ENCODE measurements at regions of chr9 and their contacts with region 1.

Region 1: GRCh38 chr9:131393622-131394463 is at the start of gene PRRC2B:
- DNase-seq: peak; percentile 78
- ATAC-seq: peak; percentile 53
- H3K4me3 ChIP-seq: peak within 1 kb of the TSS; percentile 98
- H3K27ac ChIP-seq: peak within 1 kb of the TSS; percentile 68
- H3K4me1 ChIP-seq: peaks cover 27% of the 10 kb centered on the region
- H3K27me3 ChIP-seq: no peaks in the 10 kb centered on the region
- CTCF ChIP-seq: no peak
- total RNA-seq, gene PRRC2B: 46.9 and 64.7 TPM in 2 replicates

Region 2: DNA sequence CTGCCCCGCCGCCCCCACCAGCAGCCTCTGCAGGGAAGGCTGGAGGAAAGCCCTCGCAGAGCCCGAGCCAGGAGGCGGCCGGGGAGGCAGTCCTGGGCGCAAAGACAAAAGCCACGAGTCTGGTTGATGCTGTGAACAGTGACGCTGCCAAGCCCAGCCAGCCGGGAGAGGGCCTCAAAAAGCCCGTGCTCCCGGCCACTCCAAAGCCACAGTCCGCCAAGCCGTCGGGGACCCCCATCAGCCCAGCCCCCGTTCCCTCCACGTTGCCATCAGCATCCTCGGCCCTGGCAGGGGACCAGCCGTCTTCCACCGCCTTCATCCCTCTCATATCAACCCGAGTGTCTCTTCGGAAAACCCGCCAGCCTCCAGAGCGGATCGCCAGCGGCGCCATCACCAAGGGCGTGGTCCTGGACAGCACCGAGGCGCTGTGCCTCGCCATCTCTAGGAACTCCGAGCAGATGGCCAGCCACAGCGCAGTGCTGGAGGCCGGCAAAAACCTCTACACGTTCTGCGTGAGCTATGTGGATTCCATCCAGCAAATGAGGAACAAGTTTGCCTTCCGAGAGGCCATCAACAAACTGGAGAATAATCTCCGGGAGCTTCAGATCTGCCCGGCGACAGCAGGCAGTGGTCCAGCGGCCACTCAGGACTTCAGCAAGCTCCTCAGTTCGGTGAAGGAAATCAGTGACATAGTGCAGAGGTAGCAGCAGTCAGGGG is 508.7 kb before region 1 on chr9:
- CTCF ChIA-PET with region 1: no interaction called
- POLR2A ChIA-PET with region 1: no interaction called
- intact Hi-C with region 1: no loop called
- DNase-seq: no peak
- ATAC-seq: no peak
- H3K4me3 ChIP-seq: no peak overlapping the region
- H3K27ac ChIP-seq: no peak overlapping the region
- H3K4me1 ChIP-seq: no peaks in the 10 kb centered on the region; the same call in 1 of the 2 replicates
- H3K27me3 ChIP-seq: no peaks in the 10 kb centered on the region
- CTCF ChIP-seq: no peak

Region 3: GRCh38 chr9:131289301-131290038 is 104.4 kb before region 1 on chr9 and contains the start of gene PLPP7:
- CTCF ChIA-PET with region 1: no interaction called
- POLR2A ChIA-PET with region 1: no interaction called
- intact Hi-C with region 1: no loop called
- DNase-seq: no peak
- ATAC-seq: no peak
- H3K4me3 ChIP-seq: no peak within 1 kb of the TSS
- H3K27ac ChIP-seq: no peak within 1 kb of the TSS
- H3K4me1 ChIP-seq: no peaks in the 10 kb centered on the region
- H3K27me3 ChIP-seq: no peaks in the 10 kb centered on the region
- CTCF ChIP-seq: no peak
- total RNA-seq, gene PLPP7: 0.98 TPM in 1 of 2 replicates, not detected in the other

Region 4: DNA sequence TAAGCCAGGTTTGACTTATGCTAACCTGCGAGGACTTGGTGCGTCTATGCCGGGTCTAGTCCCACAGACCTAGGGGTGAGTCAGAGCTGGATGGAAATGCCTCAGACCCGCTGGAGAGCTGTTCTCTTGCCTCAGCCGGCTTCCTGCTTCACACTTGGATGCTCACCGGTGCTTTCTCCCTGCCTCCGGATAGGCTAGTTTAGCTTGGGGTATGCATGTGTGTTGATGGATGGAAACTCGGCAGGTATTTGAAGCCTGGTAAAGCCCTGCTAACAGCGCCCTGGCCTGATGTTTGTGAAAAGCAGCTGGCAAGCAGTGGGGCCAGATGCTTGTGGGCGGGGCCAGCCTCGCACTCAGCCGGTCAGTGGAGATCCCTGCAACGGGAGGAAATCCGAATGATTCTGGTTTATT is 29.3 kb after region 1 on chr9:
- CTCF ChIA-PET with region 1: no interaction called
- POLR2A ChIA-PET with region 1: no interaction called
- intact Hi-C with region 1: loop called (anchors 2 kb)
- DNase-seq: peak; percentile 77
- ATAC-seq: peak; percentile 93
- H3K4me3 ChIP-seq: no peak overlapping the region
- H3K27ac ChIP-seq: peak overlapping the region; percentile 8; the same call in 1 of the 2 replicates
- H3K4me1 ChIP-seq: peaks cover 20% of the 10 kb centered on the region
- H3K27me3 ChIP-seq: no peaks in the 10 kb centered on the region
- CTCF ChIP-seq: no peak

Region 5: GRCh38 chr9:131809941-131810344 is 416.1 kb after region 1 on chr9:
- CTCF ChIA-PET with region 1: no interaction called
- POLR2A ChIA-PET with region 1: no interaction called
- intact Hi-C with region 1: no loop called
- DNase-seq: peak; percentile 80
- ATAC-seq: peak; percentile 35; the same call in 1 of the 2 replicates
- H3K4me3 ChIP-seq: no peak overlapping the region
- H3K27ac ChIP-seq: peak overlapping the region; percentile 11; the same call in 1 of the 2 replicates
- H3K4me1 ChIP-seq: peaks cover 21% of the 10 kb centered on the region
- H3K27me3 ChIP-seq: no peaks in the 10 kb centered on the region
- CTCF ChIP-seq: no peak